Mammary epithelial cell (primary cell): ENCODE measurements at regions of chr11 and their contacts with region 1.

Region 1: GRCh38 chr11:122642472-122642922 is 13.0 kb upstream of the UBASH3B start:
- DNase-seq: peak; percentile 80
- H3K4me3 ChIP-seq: no peak overlapping the region
- H3K27ac ChIP-seq: peak overlapping the region; percentile 48
- H3K4me1 ChIP-seq: peaks cover 27% of the 10 kb centered on the region
- H3K27me3 ChIP-seq: no peaks in the 10 kb centered on the region
- CTCF ChIP-seq: no peak

Region 2: GRCh38 chr11:122159173-122159721 is 483.2 kb before region 1 on chr11:
- CTCF ChIA-PET with region 1: no interaction called
- dilution Hi-C with region 1: no loop called
- in situ Hi-C with region 1: no loop called
- intact Hi-C with region 1: no loop called
- DNase-seq: peak; percentile 52
- H3K4me3 ChIP-seq: peak overlapping the region; percentile 25 to 65 (median 37)
- H3K27ac ChIP-seq: peak overlapping the region; percentile 95
- H3K4me1 ChIP-seq: peaks cover 69% of the 10 kb centered on the region
- H3K27me3 ChIP-seq: no peaks in the 10 kb centered on the region
- CTCF ChIP-seq: no peak

Region 3: DNA sequence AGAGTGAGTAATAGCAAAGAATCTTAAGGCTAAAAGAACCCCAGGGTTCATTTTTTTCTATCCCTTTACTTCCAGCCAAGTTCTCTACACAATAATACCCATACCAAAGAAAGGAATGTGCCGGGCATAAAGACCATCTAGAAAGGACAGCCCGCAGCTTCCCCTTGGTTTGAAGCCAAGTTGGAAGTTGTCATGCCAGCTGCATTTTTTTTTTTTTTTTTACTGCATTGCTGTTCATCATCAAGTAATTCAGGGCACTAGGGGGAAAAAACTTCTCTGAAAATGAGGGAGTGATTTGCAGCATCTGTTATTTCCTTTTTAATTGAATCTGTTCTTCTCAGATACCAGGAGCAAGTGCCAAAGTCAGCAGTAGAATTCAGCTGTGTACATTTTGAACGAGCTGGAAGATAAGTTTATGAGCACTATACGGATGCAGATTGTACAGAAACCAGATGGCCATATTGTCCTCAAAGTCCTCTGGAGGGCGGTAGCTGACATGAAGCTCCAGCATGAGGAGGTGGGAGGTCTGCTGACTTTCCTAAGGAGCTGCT is 69.4 kb after region 1 on chr11:
- CTCF ChIA-PET with region 1: no interaction called
- dilution Hi-C with region 1: loop called (anchors 10 kb)
- in situ Hi-C with region 1: no loop called
- intact Hi-C with region 1: no loop called
- DNase-seq: peak; percentile 53
- H3K4me3 ChIP-seq: no peak overlapping the region
- H3K27ac ChIP-seq: no peak overlapping the region
- H3K4me1 ChIP-seq: peaks cover 50% of the 10 kb centered on the region
- H3K27me3 ChIP-seq: no peaks in the 10 kb centered on the region
- CTCF ChIP-seq: no peak